Psoas muscle (tissue), 8 donors: ENCODE measurements at regions of chr3 and their contacts with region 1.

Region 1: DNA sequence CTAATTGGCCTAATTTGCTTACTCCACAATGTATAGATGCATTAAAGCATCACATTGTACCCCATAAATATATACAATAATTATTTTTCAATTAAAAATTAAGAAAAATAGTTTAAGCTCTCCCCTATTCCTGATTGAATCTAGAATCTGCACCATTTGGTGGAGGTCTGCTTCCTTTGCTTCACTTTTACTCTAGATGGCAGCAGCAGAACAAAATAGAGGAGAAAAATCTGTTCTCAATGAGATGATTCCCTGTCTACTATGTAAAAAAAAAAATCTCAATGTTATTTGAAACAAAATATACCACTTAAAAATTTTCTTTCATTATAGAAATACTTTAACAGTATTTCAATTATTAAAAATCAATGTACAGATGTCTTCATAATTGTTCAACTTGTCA is 109.6 kb upstream of the FXR1 start:
- DNase-seq: no peak
- ATAC-seq: peak in 3 of 4 donors; percentile 48 to 80 (median 68)
- H3K4me3 ChIP-seq: no peak overlapping the region
- H3K27ac ChIP-seq: no peak overlapping the region
- H3K4me1 ChIP-seq: peaks cover 12% of the 10 kb centered on the region
- H3K27me3 ChIP-seq: no peaks in the 10 kb centered on the region
- CTCF ChIP-seq: peak; percentile 65

Region 2: GRCh38 chr3:180870008-180870699 is 67.3 kb after region 1 on chr3:
- intact Hi-C with region 1: loop called in 1 of 2 experiments (anchors 5 kb)
- DNase-seq: peak; percentile 49 to 79
- ATAC-seq: peak; percentile 65 to 78 (median 71)
- H3K4me3 ChIP-seq: peak overlapping the region; percentile 62
- H3K27ac ChIP-seq: peak overlapping the region; percentile 81
- H3K4me1 ChIP-seq: peaks cover 17% of the 10 kb centered on the region
- H3K27me3 ChIP-seq: no peaks in the 10 kb centered on the region
- CTCF ChIP-seq: no peak

Region 3: DNA sequence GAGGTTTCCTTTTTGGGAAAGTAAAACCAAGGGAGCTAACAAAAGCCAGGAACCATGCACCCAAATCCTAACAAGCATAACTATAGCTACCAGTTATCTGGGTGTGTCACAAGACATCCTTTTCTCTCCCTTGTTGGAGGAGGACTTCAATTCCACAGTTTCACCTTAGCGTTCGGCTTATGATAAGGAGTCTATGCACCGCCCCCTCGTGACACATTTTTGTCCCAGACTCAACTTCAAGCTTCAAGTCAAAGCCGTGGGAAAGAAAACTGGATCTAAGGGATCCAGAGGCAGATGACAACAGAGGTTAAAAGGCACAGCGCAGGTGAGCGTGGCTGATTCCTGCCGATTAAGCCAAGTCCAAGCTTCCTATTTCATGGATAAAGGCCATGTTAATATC is 95.7 kb after region 1 on chr3:
- intact Hi-C with region 1: no loop called
- DNase-seq: no peak
- ATAC-seq: no peak
- H3K4me3 ChIP-seq: no peak overlapping the region
- H3K27ac ChIP-seq: no peak overlapping the region
- H3K4me1 ChIP-seq: no peaks in the 10 kb centered on the region
- H3K27me3 ChIP-seq: no peaks in the 10 kb centered on the region
- CTCF ChIP-seq: no peak

Region 4: DNA sequence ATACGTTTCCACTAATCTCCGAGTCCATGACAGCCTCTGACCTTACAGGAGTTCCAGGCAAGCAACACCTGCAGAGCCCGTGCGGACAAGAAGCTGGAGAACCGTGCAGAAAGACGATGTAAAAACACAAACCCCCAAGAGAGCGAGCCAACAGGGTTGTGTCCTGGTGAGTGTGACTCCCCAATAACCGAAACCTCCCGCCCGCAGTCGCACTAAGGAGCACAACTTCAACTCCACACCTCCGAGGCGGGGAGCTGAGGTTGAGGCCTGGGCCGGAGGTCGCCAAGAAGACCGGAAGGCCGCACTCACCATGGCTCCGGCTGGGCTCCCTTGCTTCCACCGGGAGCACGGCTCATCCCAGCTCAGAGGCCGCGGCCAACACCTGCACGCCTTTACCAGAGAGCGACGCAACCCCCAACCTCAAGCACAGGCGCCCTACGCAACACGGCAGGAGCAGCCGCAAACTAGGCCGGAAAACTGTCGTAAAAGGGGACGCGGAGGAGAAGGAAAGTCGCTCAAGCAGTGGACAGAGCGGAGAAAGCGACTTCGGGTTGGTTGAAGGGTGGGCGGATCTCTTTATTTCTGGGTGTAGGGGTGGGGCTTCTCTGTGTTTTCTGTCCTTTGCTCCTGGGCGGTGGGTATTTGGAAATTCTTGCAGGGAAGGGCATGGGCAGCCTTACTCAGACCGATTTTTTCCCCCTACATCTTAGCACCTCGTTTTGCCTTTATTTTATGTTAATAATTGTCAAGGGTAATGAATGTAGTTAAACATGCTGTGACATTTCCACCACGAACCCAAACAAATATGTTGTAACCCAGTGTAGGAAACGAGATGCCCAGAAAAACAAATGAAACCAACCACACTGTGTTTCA is 186.7 kb after region 1 on chr3 and contains the start of gene DNAJC19:
- intact Hi-C with region 1: loop called in 1 of 2 experiments (anchors 5 kb)
- DNase-seq: peak; percentile 90 to 95
- ATAC-seq: peak; percentile 91 to 97 (median 96)
- H3K4me3 ChIP-seq: peak within 1 kb of the TSS; percentile 84
- H3K27ac ChIP-seq: peak within 1 kb of the TSS; percentile 89
- H3K4me1 ChIP-seq: peaks cover 13% of the 10 kb centered on the region
- H3K27me3 ChIP-seq: no peaks in the 10 kb centered on the region
- CTCF ChIP-seq: no peak
- total RNA-seq, gene DNAJC19: 61.1 to 90.3 (median 76.4) TPM

Region 5: DNA sequence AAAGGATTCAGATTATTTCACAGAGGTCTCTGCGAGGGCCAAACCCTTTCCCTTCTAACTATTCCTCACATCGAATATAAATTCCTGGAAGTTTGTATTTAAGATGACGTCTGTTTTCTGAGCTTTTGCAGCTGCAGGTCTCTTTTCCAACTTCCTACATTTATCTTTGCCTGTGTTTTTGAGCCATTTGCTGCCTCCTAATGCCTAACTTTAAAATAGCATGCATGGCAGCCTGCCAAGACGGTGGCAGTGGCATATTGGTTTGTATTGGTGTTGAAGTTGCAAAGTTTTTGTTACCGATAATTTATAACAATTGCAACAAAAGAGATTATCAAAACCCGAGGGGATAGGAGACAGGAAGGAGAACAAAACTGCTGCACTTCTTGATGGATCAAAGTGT is 373.8 kb after region 1 on chr3:
- intact Hi-C with region 1: loop called (anchors 2 to 5 kb)
- DNase-seq: peak; percentile 47 to 72
- ATAC-seq: peak in 1 of 4 donors; percentile 73
- H3K4me3 ChIP-seq: no peak overlapping the region
- H3K27ac ChIP-seq: no peak overlapping the region
- H3K4me1 ChIP-seq: no peaks in the 10 kb centered on the region
- H3K27me3 ChIP-seq: no peaks in the 10 kb centered on the region
- CTCF ChIP-seq: peak; percentile 61